CD4-positive, alpha-beta T cell (primary cell): ENCODE measurements at regions of chr16 and their contacts with region 1.

Region 1: DNA sequence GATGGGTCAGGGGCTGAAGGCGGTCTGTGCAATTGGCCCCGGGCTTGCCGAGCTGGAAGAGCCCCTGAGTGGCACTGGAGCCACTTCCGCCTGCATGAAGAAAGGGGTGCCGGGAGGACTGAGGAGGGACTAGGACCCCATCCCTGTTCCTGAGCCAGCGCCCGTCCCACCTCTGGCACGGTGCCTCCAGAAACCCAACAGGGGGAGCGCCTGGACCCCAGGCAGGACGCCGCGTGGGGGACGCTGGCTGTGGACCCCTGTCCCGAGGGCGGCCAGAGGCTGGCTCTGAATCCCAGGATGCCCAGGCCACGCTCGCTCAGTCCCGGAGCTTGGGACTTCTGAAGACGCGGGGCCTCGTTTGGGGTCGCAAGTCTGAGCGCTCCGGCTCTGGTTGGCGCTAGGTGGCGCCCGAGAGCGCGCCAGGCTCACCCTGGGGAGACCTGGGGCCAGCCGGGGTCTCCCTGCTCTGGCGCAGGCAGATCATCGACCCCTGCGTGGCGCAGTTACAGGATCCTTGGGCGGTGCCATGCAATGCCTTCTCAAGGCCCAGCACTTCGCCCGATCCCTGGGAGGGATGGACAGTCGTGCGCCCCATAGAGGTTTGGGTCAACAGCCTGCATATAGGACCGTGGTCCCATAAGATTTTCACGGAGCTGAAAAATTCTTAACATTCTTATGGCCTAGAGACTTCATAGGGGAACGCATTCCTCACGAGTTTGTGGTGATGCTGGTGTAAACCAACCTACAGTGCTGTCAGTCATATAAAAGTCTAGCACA is 58.5 kb upstream of the CREBBP start:
- DNase-seq: peak; percentile 42 to 82 (median 61)
- ATAC-seq: peak; percentile 84
- H3K4me3 ChIP-seq: peak overlapping the region; percentile 33
- H3K4me3 Mint-ChIP-seq: no peak overlapping the region
- H3K27ac ChIP-seq: no peak overlapping the region
- H3K27ac Mint-ChIP-seq: no peak overlapping the region
- H3K4me1 ChIP-seq: peaks cover 11% of the 10 kb centered on the region
- H3K4me1 Mint-ChIP-seq: no peaks in the 10 kb centered on the region
- H3K27me3 ChIP-seq: peaks cover 0 to 6% of the 10 kb centered on the region in 2 experiments
- H3K27me3 Mint-ChIP-seq: peaks cover 3% of the 10 kb centered on the region
- CTCF ChIP-seq: peak; percentile 96

Region 2: GRCh38 chr16:3761375-3762106 is 177.5 kb before region 1 on chr16:
- CTCF ChIA-PET with region 1: no interaction called
- POLR2A ChIA-PET with region 1: no interaction called
- intact Hi-C with region 1: no loop called
- DNase-seq: no peak
- ATAC-seq: no peak
- H3K4me3 ChIP-seq: no peak overlapping the region
- H3K4me3 Mint-ChIP-seq: no peak overlapping the region
- H3K27ac ChIP-seq: no peak overlapping the region
- H3K27ac Mint-ChIP-seq: no peak overlapping the region
- H3K4me1 ChIP-seq: no peaks in the 10 kb centered on the region
- H3K4me1 Mint-ChIP-seq: no peaks in the 10 kb centered on the region
- H3K27me3 ChIP-seq: no peaks in the 10 kb centered on the region
- H3K27me3 Mint-ChIP-seq: no peaks in the 10 kb centered on the region
- CTCF ChIP-seq: no peak

Region 3: GRCh38 chr16:3880623-3881498 is 58.2 kb before region 1 on chr16 and contains the start of gene CREBBP:
- CTCF ChIA-PET with region 1: no interaction called
- POLR2A ChIA-PET with region 1: no interaction called
- intact Hi-C with region 1: no loop called
- DNase-seq: peak; percentile 70 to 97 (median 86)
- ATAC-seq: peak; percentile 79
- H3K4me3 ChIP-seq: peak within 1 kb of the TSS; percentile 91
- H3K4me3 Mint-ChIP-seq: peak within 1 kb of the TSS; percentile 93
- H3K27ac ChIP-seq: no peak within 1 kb of the TSS
- H3K27ac Mint-ChIP-seq: peak within 1 kb of the TSS; percentile 94
- H3K4me1 ChIP-seq: peaks cover 37% of the 10 kb centered on the region
- H3K4me1 Mint-ChIP-seq: peaks cover 46% of the 10 kb centered on the region
- H3K27me3 ChIP-seq: peaks cover 0 to 2% of the 10 kb centered on the region in 2 experiments
- H3K27me3 Mint-ChIP-seq: peaks cover 8% of the 10 kb centered on the region
- CTCF ChIP-seq: no peak
- total RNA-seq, gene CREBBP: 145 to 152 TPM

Region 4: DNA sequence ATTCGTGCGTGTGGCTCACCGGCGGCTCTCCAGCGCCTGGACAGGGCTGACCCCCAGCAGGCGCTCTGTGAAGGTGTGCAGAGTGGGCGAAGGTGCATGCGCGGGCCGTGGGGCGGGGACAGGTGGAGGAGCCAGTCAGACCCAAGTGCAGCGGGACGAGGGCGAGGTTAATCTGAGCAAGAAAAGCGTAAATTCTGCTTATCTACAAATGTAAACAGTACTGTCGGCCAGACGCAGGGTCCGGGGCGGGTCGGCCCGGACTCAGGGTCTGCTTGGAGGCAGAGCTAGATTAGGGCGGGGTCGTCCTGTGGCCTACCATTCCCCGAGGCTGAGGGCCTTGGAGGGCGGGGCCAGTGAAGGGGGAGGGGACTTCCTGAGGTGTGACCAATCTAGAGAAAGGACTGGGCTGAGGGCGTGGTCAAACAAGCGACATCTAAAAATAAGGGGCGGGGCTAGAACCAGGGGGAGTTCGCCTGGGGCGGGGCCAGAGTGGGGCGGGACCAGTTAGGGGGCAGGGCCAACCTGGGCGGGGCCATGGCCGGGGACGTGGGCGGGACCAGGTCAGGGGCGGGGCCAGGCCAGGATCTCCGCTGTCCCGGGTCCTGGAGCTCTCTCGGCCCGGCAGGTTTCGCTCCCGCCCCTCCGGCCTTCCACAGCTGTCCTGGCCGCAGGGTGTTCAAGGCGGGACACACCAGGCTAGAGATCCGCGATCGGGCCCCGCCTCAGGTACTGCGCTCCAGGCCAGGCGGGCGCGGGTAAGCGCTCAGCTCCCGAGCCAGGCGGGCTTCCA is 1018.9 kb after region 1 on chr16 and contains the start of gene SEC14L5:
- CTCF ChIA-PET with region 1: no interaction called
- POLR2A ChIA-PET with region 1: no interaction called
- intact Hi-C with region 1: loop called in 1 of 2 experiments (anchors 5 kb)
- DNase-seq: peak; percentile 79 to 95 (median 89)
- ATAC-seq: peak; percentile 93
- H3K4me3 ChIP-seq: peak within 1 kb of the TSS; percentile 52
- H3K4me3 Mint-ChIP-seq: peak within 1 kb of the TSS; percentile 86
- H3K27ac ChIP-seq: no peak within 1 kb of the TSS
- H3K27ac Mint-ChIP-seq: no peak within 1 kb of the TSS
- H3K4me1 ChIP-seq: peaks cover 26% of the 10 kb centered on the region
- H3K4me1 Mint-ChIP-seq: peaks cover 24% of the 10 kb centered on the region
- H3K27me3 ChIP-seq: peaks cover 13 to 16% of the 10 kb centered on the region in 2 experiments
- H3K27me3 Mint-ChIP-seq: peaks cover 53% of the 10 kb centered on the region
- CTCF ChIP-seq: no peak
- total RNA-seq, gene SEC14L5: not detected